ENCODE measurements at regions of chrX and their contacts with region 1.

Region 1: GRCh38 chrX:19990556-19991349 is at the start of gene BCLAF3:
- DNase-seq: peak; percentile 81
- H3K4me3 Mint-ChIP-seq: peak within 1 kb of the TSS; percentile 90
- H3K27ac Mint-ChIP-seq: peak within 1 kb of the TSS; percentile 90
- H3K4me1 Mint-ChIP-seq: peaks cover 15% of the 10 kb centered on the region
- H3K27me3 Mint-ChIP-seq: no peaks in the 10 kb centered on the region
- total RNA-seq, gene BCLAF3: 3.8 and 5.4 TPM in 2 replicates

Region 2: DNA sequence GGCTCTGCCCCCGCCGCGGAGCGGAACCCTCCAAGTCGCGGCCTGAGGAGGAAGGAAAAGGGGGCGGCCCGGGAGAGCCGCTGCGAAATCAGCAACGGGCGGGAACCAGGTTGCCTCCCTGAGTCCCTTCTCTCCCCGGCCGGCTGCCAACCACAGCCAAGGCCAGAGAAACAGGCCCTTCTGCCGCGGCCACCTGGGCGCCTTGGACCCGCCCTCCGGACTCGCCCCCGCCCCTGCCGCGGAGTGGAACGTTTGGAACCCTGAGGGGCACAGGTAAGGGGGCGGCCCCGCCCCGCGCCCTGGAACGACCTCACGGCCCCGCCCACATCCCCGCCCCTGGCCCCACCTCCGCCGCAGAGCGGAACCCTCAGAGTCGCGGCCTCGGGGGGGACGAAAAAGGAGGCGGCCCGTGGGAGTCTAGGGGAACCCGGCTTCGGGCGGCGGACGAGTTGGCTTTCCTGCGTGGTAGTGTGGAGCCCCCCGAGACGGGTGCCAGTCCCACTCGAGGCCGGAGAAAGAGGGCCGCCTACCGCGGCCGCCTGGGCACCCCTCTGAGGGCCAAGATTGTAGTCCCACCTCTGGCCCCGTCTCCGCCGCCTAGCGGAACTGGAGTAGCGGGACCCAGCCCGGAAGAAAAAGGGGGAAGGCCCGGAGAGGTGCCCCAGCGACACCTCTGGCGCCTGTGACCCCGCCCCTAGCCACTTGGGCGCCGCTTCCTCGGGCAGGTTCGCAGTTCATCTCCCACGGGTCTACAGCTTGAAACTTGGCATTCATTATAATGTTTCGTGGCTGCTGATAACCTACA is 1006.2 kb before region 1 on chrX:
- intact Hi-C with region 1: loop called (anchors 5 kb)
- DNase-seq: peak; percentile 76
- H3K4me3 Mint-ChIP-seq: peak overlapping the region; percentile 84
- H3K27ac Mint-ChIP-seq: peak overlapping the region; percentile 78
- H3K4me1 Mint-ChIP-seq: peaks cover 6% of the 10 kb centered on the region
- H3K27me3 Mint-ChIP-seq: no peaks in the 10 kb centered on the region

Region 3: DNA sequence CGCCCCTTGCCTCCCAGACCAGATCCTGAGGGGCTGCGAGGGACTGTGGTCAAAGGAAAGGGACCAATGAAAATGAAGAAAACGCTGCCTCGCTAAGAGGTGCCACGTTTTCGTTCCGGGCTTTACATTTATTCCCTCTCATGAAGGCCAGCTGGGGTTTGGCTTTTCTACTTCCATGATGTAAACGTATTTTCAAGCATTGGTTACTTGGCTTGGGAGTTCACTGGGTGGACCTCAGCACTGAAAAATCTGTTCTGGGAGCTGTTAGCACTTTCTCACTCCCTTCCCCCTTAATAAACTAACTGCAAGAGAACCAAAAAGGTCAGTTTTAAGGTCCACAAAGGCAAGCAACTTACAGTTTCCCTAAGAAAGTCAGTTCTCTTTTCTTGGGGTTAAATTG is 827.9 kb before region 1 on chrX:
- intact Hi-C with region 1: no loop called
- DNase-seq: no peak
- H3K4me3 Mint-ChIP-seq: no peak overlapping the region
- H3K27ac Mint-ChIP-seq: no peak overlapping the region
- H3K4me1 Mint-ChIP-seq: no peaks in the 10 kb centered on the region
- H3K27me3 Mint-ChIP-seq: no peaks in the 10 kb centered on the region

Region 4: DNA sequence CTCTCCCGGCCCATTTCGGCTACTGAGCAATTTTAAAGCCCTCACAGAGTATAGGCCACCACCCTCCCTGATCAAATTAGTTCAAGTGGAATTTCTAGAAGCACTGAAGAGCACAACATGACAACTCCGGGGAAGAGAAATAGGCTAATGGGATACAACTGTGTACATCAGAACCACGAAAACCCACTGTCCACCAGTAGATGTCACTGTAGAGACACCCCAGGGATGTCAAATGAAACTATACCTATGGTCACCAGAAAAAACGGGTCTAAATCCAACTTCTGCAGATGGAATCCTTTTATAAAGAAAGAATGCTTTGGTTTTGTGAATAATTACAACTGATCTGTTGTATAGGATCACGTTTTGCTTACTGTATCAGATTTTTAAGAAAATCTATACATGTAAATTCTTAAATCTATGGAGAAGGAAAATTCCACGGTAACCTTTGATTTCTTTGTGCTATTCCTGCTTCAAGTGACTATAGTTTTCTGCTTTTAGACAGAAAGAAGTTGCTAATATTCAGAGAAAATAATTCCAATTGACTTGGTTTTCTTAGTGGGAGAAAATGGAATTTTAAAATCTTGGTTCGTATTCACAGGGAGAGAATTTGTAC is 446.0 kb before region 1 on chrX:
- intact Hi-C with region 1: loop called (anchors 5 kb)
- DNase-seq: no peak
- H3K4me3 Mint-ChIP-seq: no peak overlapping the region
- H3K27ac Mint-ChIP-seq: peak overlapping the region; percentile 70
- H3K4me1 Mint-ChIP-seq: peaks cover 19% of the 10 kb centered on the region
- H3K27me3 Mint-ChIP-seq: no peaks in the 10 kb centered on the region

Region 5: DNA sequence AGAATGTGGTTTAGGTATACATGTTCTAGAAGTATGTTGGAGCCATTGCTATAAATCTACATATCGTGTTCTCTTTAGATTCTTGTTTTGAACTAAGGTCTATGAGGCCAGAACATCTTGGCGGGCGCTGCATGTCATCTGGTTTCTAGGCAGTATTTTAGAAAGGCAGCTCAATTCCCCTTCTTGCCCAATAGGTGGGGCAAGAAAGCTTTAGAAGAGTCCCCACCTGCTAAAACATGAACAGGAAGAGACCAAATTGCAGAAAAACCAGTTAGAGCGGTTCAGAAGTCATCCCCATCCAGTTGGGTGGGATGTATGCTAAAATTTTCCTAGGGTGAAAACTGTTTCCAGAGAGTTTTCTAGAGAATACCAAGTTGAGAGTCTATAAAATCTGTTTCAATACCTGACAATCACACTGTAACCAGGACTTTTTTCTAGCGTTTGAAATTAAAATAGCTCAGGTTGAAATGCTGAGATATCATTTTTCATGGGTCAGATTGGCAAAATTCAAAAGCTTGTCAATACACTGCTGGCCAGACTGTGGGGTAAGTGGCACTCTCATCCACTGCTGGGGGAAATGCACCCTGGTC is 85.9 kb before region 1 on chrX:
- intact Hi-C with region 1: loop called (anchors 2 kb)
- DNase-seq: no peak
- H3K4me3 Mint-ChIP-seq: no peak overlapping the region
- H3K27ac Mint-ChIP-seq: no peak overlapping the region
- H3K4me1 Mint-ChIP-seq: peaks cover 14% of the 10 kb centered on the region
- H3K27me3 Mint-ChIP-seq: no peaks in the 10 kb centered on the region

Region 6: GRCh38 chrX:19964017-19964710 is 26.6 kb before region 1 on chrX:
- intact Hi-C with region 1: loop called (anchors 2 kb)
- DNase-seq: peak; percentile 11
- H3K4me3 Mint-ChIP-seq: no peak overlapping the region
- H3K27ac Mint-ChIP-seq: no peak overlapping the region
- H3K4me1 Mint-ChIP-seq: peaks cover 19% of the 10 kb centered on the region
- H3K27me3 Mint-ChIP-seq: no peaks in the 10 kb centered on the region

Region 7: GRCh38 chrX:20141281-20142220 is 150.8 kb after region 1 on chrX and contains the start of gene EIF1AX:
- intact Hi-C with region 1: loop called (anchors 2 kb)
- DNase-seq: peak; percentile 92
- H3K4me3 Mint-ChIP-seq: peak within 1 kb of the TSS; percentile 85
- H3K27ac Mint-ChIP-seq: peak within 1 kb of the TSS; percentile 79
- H3K4me1 Mint-ChIP-seq: peaks cover 27% of the 10 kb centered on the region
- H3K27me3 Mint-ChIP-seq: no peaks in the 10 kb centered on the region
- total RNA-seq, gene EIF1AX: 94.1 and 94.5 TPM in 2 replicates